Mucosa of descending colon (tissue), 3 donors: ENCODE measurements at regions of chr6 and their contacts with region 1.

Region 1: DNA sequence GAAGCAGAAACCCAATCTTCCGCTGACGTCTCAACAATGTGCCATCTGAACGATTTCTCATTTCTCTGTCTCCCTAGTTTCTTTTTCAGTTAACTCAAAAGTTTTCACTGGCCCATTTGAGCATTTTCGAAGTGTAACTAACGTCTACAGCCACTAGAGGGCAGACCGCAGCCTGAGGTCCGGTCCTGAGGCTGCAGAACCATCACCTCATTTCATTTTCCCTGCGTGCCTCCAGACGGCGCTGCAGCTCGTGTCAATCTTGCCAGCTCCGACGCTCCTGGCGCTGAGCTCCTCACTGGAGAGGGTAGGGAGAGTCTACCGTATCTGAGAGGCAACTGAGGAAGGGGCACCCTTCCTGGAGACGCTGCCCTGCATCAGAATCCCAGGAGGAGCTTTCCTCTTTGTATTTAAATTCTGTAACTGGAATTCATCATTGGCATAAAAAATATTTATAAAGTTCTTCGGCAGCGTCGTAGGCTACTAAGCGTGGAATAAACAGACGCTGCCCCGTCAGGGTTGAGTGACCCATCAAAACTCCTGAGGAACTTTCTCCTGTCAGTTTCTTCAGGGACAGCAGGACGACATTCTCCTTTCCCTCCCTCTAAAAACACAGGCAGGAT is 28.5 kb upstream of the DTNBP1 start:
- DNase-seq: peak; percentile 82 to 85 (median 84)
- ATAC-seq: peak; percentile 99
- H3K4me3 ChIP-seq: no peak overlapping the region
- H3K4me1 ChIP-seq: peaks cover 14% of the 10 kb centered on the region
- CTCF ChIP-seq: peak; percentile 93

Region 2: GRCh38 chr6:16128759-16129622 is 437.6 kb after region 1 on chr6 and contains the start of gene MYLIP:
- intact Hi-C with region 1: loop called in 1 of 2 experiments (anchors 10 kb)
- DNase-seq: peak; percentile 98 to 99 (median 99)
- ATAC-seq: peak; percentile 95
- H3K4me3 ChIP-seq: peak within 1 kb of the TSS; percentile 99
- H3K4me1 ChIP-seq: peaks cover 27% of the 10 kb centered on the region
- CTCF ChIP-seq: peak; percentile 80
- total RNA-seq, gene MYLIP: 22.7 to 64.4 (median 40.3) TPM

Region 3: DNA sequence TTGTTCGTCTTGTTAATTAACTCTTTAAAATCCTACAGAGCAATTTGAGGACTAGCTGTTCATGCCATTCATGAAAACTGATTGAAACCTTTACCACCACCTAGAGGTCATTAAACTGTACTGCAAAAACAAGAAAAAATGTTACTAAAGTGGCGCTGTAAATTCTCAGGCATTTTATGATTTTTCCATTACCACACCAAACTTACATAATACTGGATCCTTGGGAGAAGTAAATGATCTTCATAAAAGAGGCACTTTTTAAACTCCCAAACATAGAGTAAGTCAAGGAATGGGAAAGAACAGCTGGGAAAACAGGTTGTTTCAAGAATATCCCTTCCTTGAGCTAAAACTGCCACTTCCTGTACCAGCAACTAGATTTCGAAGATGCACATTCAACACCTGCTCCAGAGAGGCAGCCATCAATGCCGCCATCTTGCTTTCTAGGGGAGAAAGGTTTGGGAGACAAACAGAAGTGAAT is 491.9 kb after region 1 on chr6:
- intact Hi-C with region 1: loop called in 1 of 2 experiments (anchors 10 kb)
- DNase-seq: no peak
- ATAC-seq: peak; percentile 59
- H3K4me3 ChIP-seq: no peak overlapping the region
- H3K4me1 ChIP-seq: peaks cover 6% of the 10 kb centered on the region
- CTCF ChIP-seq: peak; percentile 44